IMR-90 (cell line): ENCODE measurements at regions of chr16 and their contacts with region 1.

Region 1: GRCh38 chr16:86575754-86576557 is 2.4 kb upstream of the FOXL1 start:
- DNase-seq: peak; percentile 97
- ATAC-seq: peak; percentile 63
- H3K4me3 ChIP-seq: peak overlapping the region; percentile 60
- H3K27ac ChIP-seq: peak overlapping the region; percentile 84
- H3K4me1 ChIP-seq: peaks cover 11% of the 10 kb centered on the region
- H3K27me3 ChIP-seq: no peaks in the 10 kb centered on the region
- CTCF ChIP-seq: peak; percentile 89
- POLR2A ChIP-seq: peak; percentile 95
- RAD21 ChIP-seq: peak; percentile 81

Region 2: DNA sequence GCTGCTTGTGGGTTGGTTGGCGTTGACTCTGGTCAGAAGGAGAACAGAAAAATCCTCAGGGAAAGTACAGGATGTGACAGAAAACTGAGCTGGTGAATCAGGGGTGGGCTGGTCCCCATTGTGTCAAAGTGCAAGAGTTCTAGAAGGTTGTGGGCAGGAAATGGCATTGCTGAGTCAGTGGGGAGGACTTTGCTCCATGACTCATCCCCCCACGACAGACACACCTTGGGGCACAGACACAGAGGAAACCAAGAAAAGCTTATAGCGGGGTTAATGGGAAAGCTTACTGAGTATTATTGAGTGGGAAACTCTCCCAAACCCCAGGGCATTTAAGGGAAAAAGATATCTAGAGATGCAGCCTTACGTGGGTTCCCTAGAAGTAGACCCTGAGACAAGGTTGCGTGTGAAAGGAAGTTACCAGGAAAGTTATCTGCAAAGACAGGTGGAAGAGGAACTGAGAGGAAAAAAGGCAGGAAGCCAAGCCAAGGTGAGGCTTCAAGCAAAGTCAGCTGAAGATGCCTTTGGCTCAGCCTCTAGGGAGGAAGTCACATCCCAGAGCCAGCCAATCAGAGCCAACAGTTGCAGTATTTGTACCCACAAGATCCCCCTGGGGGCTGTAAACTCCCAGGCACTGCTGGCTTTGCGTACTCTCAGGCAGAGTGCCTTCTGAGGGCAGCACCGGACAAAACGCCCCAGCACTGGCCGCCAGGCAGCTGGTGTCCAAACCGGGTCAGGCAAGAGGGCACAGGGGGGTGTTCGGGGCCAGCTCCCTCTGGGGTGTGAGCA is 88.8 kb after region 1 on chr16:
- CTCF ChIA-PET with region 1: no interaction called
- POLR2A ChIA-PET with region 1: interaction called, 7 read pairs
- dilution Hi-C with region 1: no loop called
- in situ Hi-C with region 1: loop called (anchors 5 kb)
- intact Hi-C with region 1: loop called (anchors 2 kb)
- DNase-seq: peak; percentile 98
- ATAC-seq: peak; percentile 74
- H3K4me3 ChIP-seq: no peak overlapping the region
- H3K27ac ChIP-seq: peak overlapping the region; percentile 77
- H3K4me1 ChIP-seq: peaks cover 29% of the 10 kb centered on the region
- H3K27me3 ChIP-seq: no peaks in the 10 kb centered on the region
- CTCF ChIP-seq: no peak
- POLR2A ChIP-seq: peak; percentile 4; the same call in 1 of the 2 replicates
- RAD21 ChIP-seq: peak; percentile 35; the same call in 1 of the 2 replicates

Region 3: DNA sequence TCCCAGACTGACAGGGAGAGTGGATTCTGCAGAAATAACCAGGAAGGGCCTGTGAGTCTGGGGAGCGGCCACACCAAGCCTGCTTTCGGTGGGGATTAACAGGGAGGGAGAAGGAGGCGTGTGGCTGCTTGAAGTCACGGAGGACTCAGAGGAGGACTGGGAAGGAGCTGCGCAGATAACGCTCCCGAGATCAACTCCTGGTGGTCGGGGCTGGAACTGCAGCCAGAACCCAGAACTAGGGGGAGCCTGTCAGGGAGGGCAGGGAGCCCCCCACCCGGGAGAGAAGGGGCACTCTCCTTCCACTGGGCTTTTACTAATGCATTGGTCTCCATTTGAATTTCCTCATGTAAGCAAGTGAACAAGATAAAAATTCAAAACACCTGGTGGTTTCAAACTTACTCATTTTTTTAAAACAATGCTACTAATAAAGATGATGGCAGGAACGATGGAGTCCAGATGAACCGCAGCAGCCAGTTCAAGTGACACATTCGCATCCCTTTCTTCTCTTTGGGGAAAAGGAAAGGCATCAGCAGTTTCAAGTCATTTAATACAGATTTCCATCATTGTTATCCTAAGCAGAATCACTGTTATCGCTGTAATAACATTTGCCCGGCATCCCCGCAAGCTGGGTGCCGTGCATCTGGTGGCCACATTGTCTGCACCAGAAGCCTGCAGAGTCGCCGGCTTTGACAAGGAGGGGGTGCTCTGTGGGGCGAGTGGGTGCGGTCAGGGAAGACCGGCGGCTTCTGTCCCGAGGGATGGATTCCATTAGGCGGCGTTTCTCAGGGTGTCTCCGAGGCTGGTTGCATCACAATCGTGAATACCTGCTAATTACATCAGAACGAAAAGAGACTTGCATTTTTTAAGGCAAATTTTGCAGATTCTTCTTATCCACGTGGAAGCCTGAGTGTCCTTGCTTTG is 185.4 kb after region 1 on chr16:
- CTCF ChIA-PET with region 1: interaction called, 3 read pairs
- POLR2A ChIA-PET with region 1: no interaction called
- dilution Hi-C with region 1: no loop called
- in situ Hi-C with region 1: loop called (anchors 10 kb)
- intact Hi-C with region 1: loop called (anchors 2 kb)
- DNase-seq: peak; percentile 68
- ATAC-seq: peak; percentile 97
- H3K4me3 ChIP-seq: peak overlapping the region; percentile 13; the same call in 1 of the 2 replicates
- H3K27ac ChIP-seq: no peak overlapping the region
- H3K4me1 ChIP-seq: peaks cover 6% of the 10 kb centered on the region; the same call in 1 of the 2 replicates
- H3K27me3 ChIP-seq: no peaks in the 10 kb centered on the region; the same call in 1 of the 2 replicates
- CTCF ChIP-seq: peak; percentile 69
- POLR2A ChIP-seq: no peak
- RAD21 ChIP-seq: peak; percentile 61

Region 4: GRCh38 chr16:86929057-86929871 is 353.3 kb after region 1 on chr16:
- CTCF ChIA-PET with region 1: no interaction called
- POLR2A ChIA-PET with region 1: no interaction called
- dilution Hi-C with region 1: no loop called
- in situ Hi-C with region 1: no loop called
- intact Hi-C with region 1: loop called (anchors 2 kb)
- DNase-seq: peak; percentile 93
- ATAC-seq: peak; percentile 66
- H3K4me3 ChIP-seq: no peak overlapping the region
- H3K27ac ChIP-seq: peak overlapping the region; percentile 75
- H3K4me1 ChIP-seq: peaks cover 41% of the 10 kb centered on the region
- H3K27me3 ChIP-seq: no peaks in the 10 kb centered on the region
- CTCF ChIP-seq: no peak
- POLR2A ChIP-seq: peak; percentile 47; the same call in 1 of the 2 replicates
- RAD21 ChIP-seq: peak; percentile 39